ENCODE measurements at regions of chr20 and their contacts with region 1.

Region 1: DNA sequence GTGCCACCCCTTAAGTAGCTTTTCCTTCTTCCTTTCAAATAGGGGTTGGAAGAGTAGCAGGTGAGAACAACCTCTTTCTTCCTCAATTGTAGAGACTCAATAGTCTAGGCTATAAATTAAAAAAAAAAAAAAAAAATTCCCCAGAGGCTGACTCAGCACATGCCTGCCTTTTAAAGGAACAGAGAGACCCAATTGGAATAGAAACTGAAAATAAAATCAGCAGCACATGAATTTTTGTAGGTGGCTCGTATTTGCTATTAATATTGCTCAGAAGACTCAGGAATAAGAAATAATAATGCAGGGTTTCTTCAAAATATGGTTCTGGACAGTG is 19.3 kb downstream of the TOP1 start:
- DNase-seq: peak in 1 of 35 experiments; percentile 54
- ATAC-seq: peak; percentile 33 to 70 (median 40)
- H3K4me3 ChIP-seq: peak overlapping the region; percentile 21 to 41
- H3K4me3 Mint-ChIP-seq: peak overlapping the region; percentile 76 to 79 (median 77)
- H3K27ac ChIP-seq: peak overlapping the region; percentile 75
- H3K27ac Mint-ChIP-seq: peak overlapping the region; percentile 86 to 92
- H3K4me1 ChIP-seq: peaks cover 34 to 63% of the 10 kb centered on the region in 2 experiments
- H3K4me1 Mint-ChIP-seq: peaks cover 92 to 96% (median 94%) of the 10 kb centered on the region in 3 donors
- H3K27me3 ChIP-seq: no peaks in the 10 kb centered on the region
- H3K27me3 Mint-ChIP-seq: no peaks in the 10 kb centered on the region

Region 2: DNA sequence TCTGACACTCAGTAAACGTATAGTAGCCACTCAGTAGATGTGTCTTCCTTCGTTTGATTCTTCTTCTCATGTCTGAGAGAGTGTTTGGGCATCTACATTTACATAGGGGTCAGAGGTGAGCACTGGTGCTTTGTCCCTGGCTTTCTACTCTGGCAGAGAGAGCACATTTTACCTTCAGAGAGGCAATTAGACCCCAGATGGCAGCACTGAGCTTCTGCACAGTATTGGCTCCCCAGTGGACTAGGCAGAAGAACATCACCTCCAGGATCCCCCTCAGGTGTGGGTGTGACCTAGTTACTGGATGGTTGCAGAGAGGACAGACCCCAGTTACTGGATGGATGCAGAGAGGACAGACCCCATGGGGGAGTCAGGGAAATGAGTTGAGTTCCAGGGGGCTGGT is 1758.6 kb before region 1 on chr20:
- CTCF ChIA-PET with region 1: no interaction called
- POLR2A ChIA-PET with region 1: no interaction called
- DNase-seq: no peak
- ATAC-seq: no peak
- H3K4me3 ChIP-seq: no peak overlapping the region
- H3K4me3 Mint-ChIP-seq: no peak overlapping the region
- H3K27ac ChIP-seq: no peak overlapping the region
- H3K27ac Mint-ChIP-seq: no peak overlapping the region
- H3K4me1 ChIP-seq: no peaks in the 10 kb centered on the region
- H3K4me1 Mint-ChIP-seq: no peaks in the 10 kb centered on the region
- H3K27me3 ChIP-seq: peaks cover 2% of the 10 kb centered on the region in 2 experiments
- H3K27me3 Mint-ChIP-seq: peaks cover 8 to 11% of the 10 kb centered on the region in 2 donors

Region 3: DNA sequence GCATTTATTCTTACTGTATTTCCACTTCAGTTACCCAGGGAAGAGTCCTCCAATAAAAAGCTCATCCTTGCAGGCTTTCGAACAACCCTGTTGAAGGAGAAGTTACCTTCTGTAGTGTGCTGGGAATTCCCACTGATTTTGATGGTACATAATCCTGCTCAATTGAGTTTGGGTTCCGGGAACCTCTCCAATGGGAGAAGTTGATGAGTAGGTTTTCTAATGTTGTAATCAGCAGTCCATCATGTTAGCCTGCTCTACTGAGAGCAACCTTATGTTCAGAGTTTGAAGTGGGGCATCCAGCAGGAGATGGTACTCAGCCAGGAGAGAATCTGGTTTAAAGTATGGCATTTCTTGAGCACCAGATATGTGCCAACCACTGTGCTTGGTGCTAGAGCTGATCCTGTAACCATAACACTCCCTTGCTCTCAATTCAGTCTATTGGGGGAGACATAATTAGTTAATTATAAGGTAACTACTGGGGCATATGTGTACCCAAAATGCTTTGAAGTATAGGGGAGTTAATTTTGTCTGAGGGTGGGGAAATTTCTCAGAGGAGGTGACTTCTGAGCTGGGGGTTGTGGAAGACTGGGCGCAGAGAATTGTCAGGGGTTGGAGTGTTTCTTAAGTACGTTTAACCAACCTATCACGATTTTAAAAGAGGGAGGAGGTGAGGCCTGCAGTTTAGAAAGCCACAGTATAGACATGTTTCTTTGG is 17.3 kb before region 1 on chr20:
- CTCF ChIA-PET with region 1: interaction called in 1 of 2 experiments, 3 read pairs
- POLR2A ChIA-PET with region 1: interaction called, 4 to 11 read pairs
- DNase-seq: no peak
- ATAC-seq: no peak
- H3K4me3 ChIP-seq: peak overlapping the region; percentile 13 to 84
- H3K4me3 Mint-ChIP-seq: peak overlapping the region; percentile 92 to 95 (median 95)
- H3K27ac ChIP-seq: no peak overlapping the region
- H3K27ac Mint-ChIP-seq: no peak overlapping the region
- H3K4me1 ChIP-seq: peaks cover 39 to 40% of the 10 kb centered on the region in 2 experiments
- H3K4me1 Mint-ChIP-seq: peaks cover 66 to 75% (median 72%) of the 10 kb centered on the region in 3 donors
- H3K27me3 ChIP-seq: no peaks in the 10 kb centered on the region
- H3K27me3 Mint-ChIP-seq: no peaks in the 10 kb centered on the region

Region 4: DNA sequence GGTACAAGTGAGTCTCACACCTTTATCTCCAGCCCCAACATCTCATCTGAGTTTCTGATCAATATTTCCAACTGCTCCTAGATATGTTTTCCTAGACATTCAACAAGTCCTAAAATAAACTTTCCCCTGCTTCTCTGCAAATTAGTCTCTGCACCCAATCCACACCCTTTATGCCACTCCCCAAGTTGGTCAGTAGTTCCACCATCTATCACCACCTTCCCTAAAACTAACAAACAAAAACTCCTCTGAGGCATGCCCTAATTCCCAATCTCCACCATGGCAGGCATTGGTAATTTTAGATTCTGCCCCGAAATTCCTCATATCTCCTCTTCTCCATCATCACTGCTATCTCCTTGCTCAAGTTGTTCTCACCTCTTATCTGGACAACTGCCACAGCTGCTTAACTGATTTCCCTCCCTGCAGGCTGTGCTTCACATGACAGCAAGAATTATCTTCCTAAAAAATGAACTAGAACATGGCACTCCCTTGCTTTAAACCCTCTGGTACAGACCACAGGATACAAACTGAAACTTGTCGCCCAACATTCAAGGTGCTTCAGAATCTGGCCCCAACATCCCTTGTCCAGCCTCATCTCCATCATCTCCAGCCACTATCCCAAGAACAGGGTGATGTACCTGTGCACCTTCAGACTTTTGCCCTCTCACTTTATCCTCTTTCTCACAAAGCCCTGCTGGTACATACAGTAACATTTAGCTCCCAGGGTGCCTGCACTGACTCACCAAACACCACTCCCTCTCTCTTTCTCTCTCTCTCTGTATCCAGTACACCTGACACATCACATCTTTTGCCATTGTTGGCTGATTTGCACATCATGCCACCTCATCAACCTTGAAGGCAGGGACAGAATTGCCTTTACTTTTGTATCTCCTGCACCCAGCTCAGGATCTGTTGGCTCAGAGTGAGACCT is 214.1 kb after region 1 on chr20:
- CTCF ChIA-PET with region 1: no interaction called
- POLR2A ChIA-PET with region 1: interaction called in 1 of 2 experiments, 10 read pairs
- DNase-seq: no peak
- ATAC-seq: no peak
- H3K4me3 ChIP-seq: no peak overlapping the region
- H3K4me3 Mint-ChIP-seq: no peak overlapping the region
- H3K27ac ChIP-seq: no peak overlapping the region
- H3K27ac Mint-ChIP-seq: no peak overlapping the region
- H3K4me1 ChIP-seq: no peaks in the 10 kb centered on the region
- H3K4me1 Mint-ChIP-seq: no peaks in the 10 kb centered on the region
- H3K27me3 ChIP-seq: no peaks in the 10 kb centered on the region
- H3K27me3 Mint-ChIP-seq: no peaks in the 10 kb centered on the region